ENCODE measurements at regions of chr7 and their contacts with region 1.

Region 1: DNA sequence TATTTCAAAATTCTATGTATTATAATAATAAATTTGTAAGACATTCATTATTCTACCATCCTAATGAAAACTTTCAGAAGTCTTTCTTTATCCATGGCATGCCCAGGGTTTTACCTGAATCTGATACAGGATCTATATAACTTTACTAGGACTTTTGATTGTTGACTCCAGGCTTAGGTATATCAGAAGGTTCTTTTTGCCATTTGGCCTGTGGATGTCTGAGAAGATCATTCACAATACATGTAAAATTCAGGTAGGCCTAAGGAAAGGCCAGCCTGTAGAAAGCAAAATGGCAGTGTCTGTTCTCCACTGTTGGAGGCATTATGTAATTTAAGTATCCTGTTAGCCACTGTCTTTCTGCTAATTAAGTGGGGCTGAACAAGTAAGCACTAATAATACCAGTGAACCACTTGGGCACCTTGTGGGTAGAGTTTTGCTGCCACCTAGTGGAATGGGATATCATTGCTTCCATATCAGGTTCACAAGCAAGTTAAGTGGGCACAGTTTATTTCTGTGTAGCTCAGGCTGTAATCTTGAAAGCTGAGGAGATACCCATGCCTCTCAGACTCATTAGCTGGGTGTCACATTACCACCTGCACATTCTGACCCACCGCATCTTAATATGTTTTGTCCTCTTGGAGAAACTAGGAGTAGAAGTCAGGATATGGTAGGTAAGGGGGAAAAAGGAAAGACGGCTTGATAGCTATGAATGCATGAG is 105.5 kb downstream of the SEPTIN7 start:
- DNase-seq: peak; percentile 75
- ATAC-seq: peak; percentile 90
- H3K4me3 Mint-ChIP-seq: no peak overlapping the region
- H3K27ac Mint-ChIP-seq: no peak overlapping the region
- H3K4me1 Mint-ChIP-seq: peaks cover 2% of the 10 kb centered on the region
- H3K27me3 Mint-ChIP-seq: no peaks in the 10 kb centered on the region

Region 2: DNA sequence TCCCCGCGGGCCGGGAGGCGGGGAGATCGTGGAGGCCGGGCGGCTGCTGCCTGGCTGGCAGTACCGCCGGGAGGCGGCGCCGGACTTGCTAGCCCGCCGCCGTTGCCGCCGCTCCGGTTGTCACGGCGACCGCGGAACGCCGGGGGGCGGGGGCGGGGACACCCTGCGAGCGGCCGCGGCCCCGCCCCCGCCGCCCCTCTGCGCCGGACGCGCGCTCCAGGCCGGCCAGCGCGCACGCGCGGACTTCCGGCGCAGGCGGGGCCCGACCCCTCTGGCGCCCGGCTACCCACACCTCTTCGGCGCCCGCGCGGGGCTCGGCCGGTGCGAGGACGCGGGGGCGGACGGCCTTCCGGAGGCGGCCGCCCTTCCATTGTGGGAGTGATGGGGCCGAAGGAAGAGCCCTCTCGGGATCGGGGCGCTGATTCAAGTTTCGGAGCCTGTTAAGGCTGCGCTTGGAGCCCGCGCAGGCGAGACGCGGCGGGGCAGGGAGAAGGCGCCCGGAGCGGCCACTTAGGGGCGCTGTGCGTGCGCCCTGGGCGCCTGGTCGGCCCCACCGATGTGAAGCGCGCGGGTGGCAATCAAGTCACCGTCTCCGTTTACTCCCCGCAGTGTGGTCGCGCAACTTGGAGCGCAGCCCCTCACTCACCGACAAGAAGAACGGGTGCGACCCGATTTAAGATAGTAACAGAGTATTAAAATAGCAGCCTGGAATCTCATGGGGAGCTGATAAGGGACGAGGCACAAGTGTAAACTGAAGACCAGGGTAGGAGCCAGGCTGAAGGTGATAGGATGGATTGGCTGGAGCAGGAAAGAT is 868.6 kb before region 1 on chr7:
- CTCF ChIA-PET with region 1: no interaction called
- POLR2A ChIA-PET with region 1: no interaction called
- intact Hi-C with region 1: loop called in 1 of 2 experiments (anchors 10 kb)
- DNase-seq: peak; percentile 93
- ATAC-seq: peak; percentile 82
- H3K4me3 Mint-ChIP-seq: peak overlapping the region; percentile 77
- H3K27ac Mint-ChIP-seq: peak overlapping the region; percentile 89
- H3K4me1 Mint-ChIP-seq: peaks cover 25% of the 10 kb centered on the region
- H3K27me3 Mint-ChIP-seq: no peaks in the 10 kb centered on the region

Region 3: DNA sequence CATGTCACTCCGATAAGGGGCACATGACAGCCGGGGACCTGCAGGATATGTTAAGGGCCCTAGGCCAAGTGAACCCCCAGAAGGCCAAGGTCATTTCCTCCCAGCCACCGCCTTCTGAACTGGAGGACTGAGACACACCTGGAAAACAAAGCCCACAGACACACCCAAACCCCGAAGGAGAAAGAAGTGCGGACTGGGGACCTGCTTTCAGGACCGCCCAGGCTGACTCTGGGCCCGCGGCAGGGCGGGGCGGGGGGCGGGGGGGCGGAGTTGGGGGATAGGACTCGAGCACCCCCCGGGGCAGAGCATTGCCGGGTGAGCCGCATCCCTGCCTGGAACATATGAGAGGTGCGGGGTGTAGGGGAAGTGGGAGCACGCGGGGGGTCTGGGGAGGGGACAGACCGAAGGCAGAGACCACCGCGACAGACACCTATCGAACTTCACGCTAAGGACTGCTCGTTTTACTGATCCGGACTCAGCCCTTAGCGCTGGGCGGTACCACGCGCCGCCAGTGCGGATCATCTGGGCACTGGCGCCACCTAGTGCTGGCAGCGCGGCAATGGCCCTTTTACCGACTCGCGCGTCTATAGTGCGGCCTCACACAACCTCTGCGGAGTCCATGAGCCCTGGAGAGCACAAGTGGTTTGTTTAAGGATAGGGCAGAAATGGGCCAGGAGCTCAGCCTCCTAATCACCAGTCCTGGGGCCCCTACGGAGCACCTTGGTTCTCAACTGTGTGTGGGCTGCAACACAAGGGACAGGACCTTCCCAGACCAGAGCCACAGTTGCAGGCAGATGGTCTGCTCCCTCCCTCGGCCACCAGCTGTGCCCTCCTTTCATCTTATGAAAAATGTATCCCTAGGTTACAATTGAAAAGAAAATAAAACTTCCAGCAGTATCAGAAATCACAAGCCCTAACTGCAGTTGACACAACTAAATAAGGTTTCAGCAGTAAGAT is 369.0 kb before region 1 on chr7:
- CTCF ChIA-PET with region 1: no interaction called
- POLR2A ChIA-PET with region 1: no interaction called
- intact Hi-C with region 1: loop called in 1 of 2 experiments (anchors 10 kb)
- DNase-seq: peak; percentile 87
- ATAC-seq: peak; percentile 99
- H3K4me3 Mint-ChIP-seq: peak overlapping the region; percentile 56
- H3K27ac Mint-ChIP-seq: no peak overlapping the region
- H3K4me1 Mint-ChIP-seq: no peaks in the 10 kb centered on the region
- H3K27me3 Mint-ChIP-seq: peaks cover 9% of the 10 kb centered on the region

Region 4: DNA sequence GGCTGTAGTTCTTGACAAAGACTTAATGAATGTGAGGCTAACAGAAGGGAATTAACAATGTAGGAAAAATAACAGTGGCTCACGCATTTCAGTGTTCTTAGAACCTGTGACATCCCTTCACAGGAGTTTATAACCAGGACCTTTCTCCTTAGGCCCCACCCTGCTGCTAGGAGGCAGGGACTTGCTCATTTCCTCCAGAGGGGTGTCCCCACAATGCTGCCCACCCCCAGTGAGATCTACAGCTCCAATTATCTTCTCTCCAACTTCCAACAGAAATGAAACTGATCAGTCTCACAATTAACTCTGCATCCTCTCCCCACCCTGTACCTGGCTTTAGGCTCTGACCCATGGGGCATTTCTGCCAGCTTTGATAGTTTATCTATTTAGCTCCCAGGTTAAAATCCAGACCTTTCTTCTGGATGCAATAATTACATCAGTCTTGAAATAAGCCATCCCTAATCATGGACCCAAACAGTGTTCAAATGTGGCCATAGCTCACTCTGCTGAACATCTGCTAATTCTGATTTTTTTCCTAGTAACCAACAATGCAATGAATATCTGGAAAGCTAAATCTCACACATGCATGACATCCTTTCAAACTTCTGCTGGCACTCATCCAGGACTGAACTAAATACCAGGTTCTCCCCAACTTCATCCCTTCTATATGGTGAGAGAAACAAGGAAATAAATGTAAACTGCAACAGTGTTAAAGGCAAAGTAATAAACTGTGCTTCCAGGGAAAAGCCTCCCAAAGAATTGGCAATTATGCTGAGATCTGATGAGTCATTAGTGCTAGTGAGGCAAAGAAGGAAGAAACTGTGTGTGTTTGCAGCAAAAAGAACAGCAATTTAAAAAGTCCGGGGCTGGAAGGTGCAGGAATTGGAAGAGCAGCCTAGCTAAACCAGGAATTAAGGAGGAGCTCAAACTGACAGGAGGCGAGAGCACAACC is 276.1 kb before region 1 on chr7:
- CTCF ChIA-PET with region 1: interaction called, 10 read pairs
- POLR2A ChIA-PET with region 1: no interaction called
- intact Hi-C with region 1: loop called in 1 of 2 experiments (anchors 5 kb)
- DNase-seq: no peak
- ATAC-seq: no peak
- H3K4me3 Mint-ChIP-seq: no peak overlapping the region
- H3K27ac Mint-ChIP-seq: peak overlapping the region; percentile 1
- H3K4me1 Mint-ChIP-seq: no peaks in the 10 kb centered on the region
- H3K27me3 Mint-ChIP-seq: no peaks in the 10 kb centered on the region

Region 5: DNA sequence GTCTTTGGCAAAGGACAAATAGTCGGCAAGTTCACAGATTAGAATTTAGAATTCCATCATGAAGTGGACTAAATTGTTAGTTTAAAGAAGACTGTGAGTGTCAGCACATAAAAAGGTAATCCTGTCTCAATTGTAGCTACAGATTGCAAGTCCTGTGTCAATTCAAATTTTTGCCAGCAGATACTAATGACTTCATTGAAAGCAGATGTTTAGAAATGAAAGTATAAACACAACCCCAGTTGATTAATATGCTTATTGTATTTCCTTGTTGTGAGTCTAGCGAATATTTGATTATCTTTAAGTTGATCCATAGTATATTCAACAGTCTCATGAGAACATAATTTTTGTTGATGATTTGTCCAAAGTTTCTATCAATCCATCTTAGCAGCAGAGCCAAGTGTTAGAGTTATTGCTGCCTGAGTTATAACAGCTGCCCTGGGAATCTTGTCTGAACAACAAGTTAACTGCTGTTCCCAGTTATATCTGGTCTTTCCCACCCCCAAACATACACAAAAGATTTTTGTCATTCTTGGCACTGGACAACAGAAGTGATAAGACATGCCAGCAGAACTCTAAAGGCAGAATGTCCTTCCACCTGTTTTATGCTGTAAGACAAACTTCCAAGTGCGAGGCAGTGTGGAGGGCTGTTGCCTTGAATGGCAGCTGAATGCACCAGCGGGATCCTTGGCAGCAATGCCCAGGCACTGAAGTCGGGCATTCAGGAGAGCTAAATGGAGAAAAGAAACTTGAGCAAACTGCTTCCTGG is 190.1 kb before region 1 on chr7:
- CTCF ChIA-PET with region 1: interaction called, 14 read pairs
- POLR2A ChIA-PET with region 1: no interaction called
- intact Hi-C with region 1: no loop called
- DNase-seq: no peak
- ATAC-seq: no peak
- H3K4me3 Mint-ChIP-seq: no peak overlapping the region
- H3K27ac Mint-ChIP-seq: no peak overlapping the region
- H3K4me1 Mint-ChIP-seq: no peaks in the 10 kb centered on the region
- H3K27me3 Mint-ChIP-seq: no peaks in the 10 kb centered on the region

Measured in activated CD4-positive, alpha-beta T cell treated with anti-CD3 and anti-CD28 coated beads for 36 hours (primary cell).